ENCODE measurements at regions of chr22 and their contacts with region 1.

Region 1: DNA sequence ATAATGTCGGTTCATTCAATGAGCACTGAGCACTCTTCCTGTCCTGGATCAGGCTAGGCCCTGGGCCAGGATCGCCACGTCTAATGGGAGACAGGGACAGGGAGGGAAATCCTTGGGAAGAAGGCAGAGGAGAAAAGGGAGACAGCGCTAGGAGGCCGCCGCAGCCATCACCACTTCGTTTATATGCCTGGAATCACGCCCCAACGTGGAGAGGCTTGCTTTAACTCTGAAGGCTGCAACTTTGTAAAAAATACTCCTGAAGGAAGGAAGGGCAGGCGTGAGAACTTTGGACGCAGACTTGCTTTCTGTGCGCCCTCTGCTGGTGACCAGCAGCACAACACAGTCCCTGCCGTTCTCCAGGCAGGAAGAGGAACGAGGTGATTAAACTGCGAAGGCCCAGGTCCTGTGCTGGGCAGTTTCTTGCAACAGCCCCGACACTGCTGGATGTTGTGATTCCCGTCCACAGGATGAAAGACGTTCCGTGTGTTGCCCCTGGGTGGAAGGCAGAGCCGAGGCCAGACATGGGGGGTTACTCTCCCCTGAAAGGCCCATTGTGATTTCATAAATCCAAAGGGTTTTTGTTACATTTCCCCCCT is 22.1 kb downstream of the RIBC2 start:
- DNase-seq: peak; percentile 93
- H3K4me3 ChIP-seq: no peak overlapping the region
- H3K27ac ChIP-seq: peak overlapping the region; percentile 25
- H3K4me1 ChIP-seq: peaks cover 6% of the 10 kb centered on the region
- H3K27me3 ChIP-seq: no peaks in the 10 kb centered on the region
- CTCF ChIP-seq: peak; percentile 93 to 95
- POLR2A ChIP-seq: no peak

Region 2: GRCh38 chr22:45192701-45193187 is 242.9 kb before region 1 on chr22:
- CTCF ChIA-PET with region 1: no interaction called
- POLR2A ChIA-PET with region 1: no interaction called
- dilution Hi-C with region 1: no loop called
- intact Hi-C with region 1: no loop called
- DNase-seq: no peak
- H3K4me3 ChIP-seq: no peak overlapping the region
- H3K27ac ChIP-seq: no peak overlapping the region
- H3K4me1 ChIP-seq: no peaks in the 10 kb centered on the region
- H3K27me3 ChIP-seq: no peaks in the 10 kb centered on the region
- CTCF ChIP-seq: no peak
- POLR2A ChIP-seq: no peak

Region 3: DNA sequence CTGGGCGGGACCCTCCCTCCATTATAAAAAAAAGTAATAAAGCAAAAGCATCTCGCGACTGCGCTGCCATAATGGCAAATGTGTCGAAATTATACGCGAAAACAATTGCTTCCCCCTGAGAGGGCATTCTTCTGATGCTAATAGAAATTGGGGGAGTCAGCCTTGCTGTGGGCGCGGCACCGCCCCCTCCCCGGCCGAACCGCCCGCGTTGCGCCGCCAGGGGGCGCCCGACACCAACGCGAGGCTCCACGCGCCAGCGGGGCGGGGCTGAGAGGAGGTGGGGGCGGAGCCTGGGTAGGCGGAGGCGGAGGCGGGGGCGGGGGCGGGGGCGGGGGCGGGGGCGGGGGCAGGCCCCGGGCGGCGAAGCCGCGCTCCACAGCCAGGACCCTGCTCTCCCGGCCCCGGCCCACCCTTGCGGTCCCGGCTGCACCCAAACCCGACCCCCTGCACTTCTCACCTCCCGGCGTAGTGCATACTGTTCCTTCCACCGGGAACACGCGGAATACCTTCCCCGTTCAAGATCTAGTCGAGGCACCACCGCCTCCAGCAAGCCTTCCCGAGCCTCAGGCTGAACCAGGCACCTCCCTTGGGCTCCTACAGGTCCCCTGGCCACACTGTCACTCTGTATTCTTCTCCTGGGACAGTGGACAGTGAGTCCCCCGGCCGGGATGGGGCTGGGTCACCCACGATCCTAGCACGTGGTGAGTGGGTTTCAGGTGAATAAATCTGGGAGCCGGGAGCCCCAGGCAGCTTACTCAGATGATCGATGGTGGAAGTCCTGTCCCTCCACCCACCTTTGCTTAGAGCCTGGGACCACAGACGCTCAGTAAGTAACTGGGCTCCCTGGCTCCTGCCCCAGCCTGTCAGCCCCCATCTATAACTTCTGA is 166.4 kb before region 1 on chr22:
- CTCF ChIA-PET with region 1: interaction called, 4 read pairs
- POLR2A ChIA-PET with region 1: no interaction called
- dilution Hi-C with region 1: no loop called
- intact Hi-C with region 1: loop called (anchors 1 kb)
- DNase-seq: peak; percentile 62
- H3K4me3 ChIP-seq: peak overlapping the region; percentile 44 to 61 (median 57)
- H3K27ac ChIP-seq: no peak overlapping the region
- H3K4me1 ChIP-seq: peaks cover 6% of the 10 kb centered on the region
- H3K27me3 ChIP-seq: peaks cover 4 to 15% of the 10 kb centered on the region in 2 experiments
- CTCF ChIP-seq: peak; percentile 74 to 78
- POLR2A ChIP-seq: no peak

Region 4: GRCh38 chr22:45309472-45310227 is 126.0 kb before region 1 on chr22 and contains the start of gene FAM118A:
- CTCF ChIA-PET with region 1: no interaction called
- POLR2A ChIA-PET with region 1: no interaction called
- dilution Hi-C with region 1: no loop called
- intact Hi-C with region 1: loop called (anchors 1 kb)
- DNase-seq: peak; percentile 91
- H3K4me3 ChIP-seq: peak within 1 kb of the TSS; percentile 74 to 98 (median 97)
- H3K27ac ChIP-seq: peak within 1 kb of the TSS; percentile 66
- H3K4me1 ChIP-seq: peaks cover 24% of the 10 kb centered on the region
- H3K27me3 ChIP-seq: no peaks in the 10 kb centered on the region
- CTCF ChIP-seq: peak in 1 of 2 donors; percentile 17
- POLR2A ChIP-seq: peak; percentile 64
- total RNA-seq, gene FAM118A: 20.2 and 44.2 TPM in 2 replicates

Region 5: DNA sequence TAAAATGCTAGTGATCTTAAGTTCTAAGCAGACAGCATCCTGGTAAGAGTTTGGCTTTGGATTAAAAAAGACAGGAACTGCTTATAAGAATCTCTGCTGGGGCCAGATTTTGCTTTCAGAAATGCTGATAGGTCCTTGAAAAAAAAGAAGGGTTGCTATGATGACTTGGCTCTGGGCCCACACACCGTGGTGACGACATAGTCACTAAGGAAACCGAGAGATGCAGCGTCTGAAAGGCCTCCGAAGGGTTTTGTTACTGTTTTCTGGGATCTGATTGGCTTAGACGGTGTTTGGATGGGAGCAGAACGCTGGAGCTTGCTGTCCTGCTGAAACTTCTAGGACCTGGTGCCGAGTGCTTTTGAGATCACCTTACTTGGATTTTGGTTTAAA is 117.5 kb before region 1 on chr22:
- CTCF ChIA-PET with region 1: interaction called, 10 read pairs
- POLR2A ChIA-PET with region 1: no interaction called
- dilution Hi-C with region 1: no loop called
- intact Hi-C with region 1: loop called (anchors 1 kb)
- DNase-seq: peak; percentile 97
- H3K4me3 ChIP-seq: peak overlapping the region in 1 of 3 experiments; percentile 44
- H3K27ac ChIP-seq: peak overlapping the region; percentile 99
- H3K4me1 ChIP-seq: peaks cover 33% of the 10 kb centered on the region
- H3K27me3 ChIP-seq: no peaks in the 10 kb centered on the region
- CTCF ChIP-seq: no peak
- POLR2A ChIP-seq: no peak

Region 6: GRCh38 chr22:45336971-45337431 is 98.6 kb before region 1 on chr22:
- CTCF ChIA-PET with region 1: interaction called, 3 read pairs
- POLR2A ChIA-PET with region 1: no interaction called
- dilution Hi-C with region 1: no loop called
- intact Hi-C with region 1: loop called (anchors 1 kb)
- DNase-seq: peak; percentile 100
- H3K4me3 ChIP-seq: no peak overlapping the region
- H3K27ac ChIP-seq: peak overlapping the region; percentile 96
- H3K4me1 ChIP-seq: peaks cover 22% of the 10 kb centered on the region
- H3K27me3 ChIP-seq: no peaks in the 10 kb centered on the region
- CTCF ChIP-seq: no peak
- POLR2A ChIP-seq: no peak

Region 7: DNA sequence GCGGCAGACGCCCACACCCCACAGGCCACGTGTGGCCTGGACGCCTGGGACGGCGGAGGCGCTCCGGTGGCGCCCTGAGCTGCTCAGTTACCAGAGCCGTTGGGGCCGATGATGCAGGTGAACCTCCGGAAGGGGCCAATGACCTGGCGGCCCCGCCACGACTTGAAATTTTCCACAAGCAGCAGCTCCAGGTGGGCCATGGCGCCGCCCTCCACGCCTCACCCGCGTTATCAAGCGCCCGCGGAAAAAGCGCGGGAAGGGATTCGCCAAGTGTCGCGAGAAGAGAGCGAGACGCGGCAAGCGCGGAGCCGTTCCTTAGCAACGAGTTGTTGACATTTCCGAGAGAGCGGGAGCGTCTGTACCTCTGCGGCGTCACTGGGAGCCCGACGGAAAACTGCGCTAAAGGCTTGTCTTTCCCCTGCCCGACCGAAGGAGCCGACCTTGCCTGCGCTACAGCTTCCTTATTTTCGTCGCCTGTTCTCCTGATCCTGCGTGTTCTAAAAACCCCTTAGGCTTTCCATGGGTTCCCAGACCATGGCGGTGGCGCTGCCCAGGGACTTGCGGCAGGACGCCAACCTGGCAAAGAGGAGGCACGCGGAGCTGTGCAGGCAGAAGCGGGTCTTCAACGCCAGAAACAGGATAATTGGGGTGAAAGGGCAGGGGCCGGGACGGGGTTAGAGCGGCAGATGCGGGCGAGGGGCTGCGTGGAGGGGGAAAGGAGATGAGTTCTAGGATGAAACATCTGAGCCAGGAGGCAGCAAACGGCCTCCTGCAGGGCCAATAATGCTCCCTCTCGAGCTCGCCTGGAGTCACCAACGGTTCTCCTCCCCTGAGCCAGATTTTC is 22.1 kb before region 1 on chr22 and contains the starts of genes RIBC2 and SMC1B:
- CTCF ChIA-PET with region 1: no interaction called
- POLR2A ChIA-PET with region 1: no interaction called
- dilution Hi-C with region 1: no loop called
- intact Hi-C with region 1: loop called (anchors 1 kb)
- DNase-seq: peak; percentile 76
- H3K4me3 ChIP-seq: peak within 1 kb of the TSS; percentile 32 to 66 (median 49)
- H3K27ac ChIP-seq: peak within 1 kb of the TSS; percentile 56
- H3K4me1 ChIP-seq: peaks cover 2% of the 10 kb centered on the region
- H3K27me3 ChIP-seq: peaks cover 0 to 3% of the 10 kb centered on the region in 2 experiments
- CTCF ChIP-seq: peak in 1 of 2 donors; percentile 1
- POLR2A ChIP-seq: no peak
- total RNA-seq, gene RIBC2: 5.7 TPM in 2 replicates
- total RNA-seq, gene SMC1B: 0.07 TPM in 1 of 2 replicates, not detected in the other

Region 8: DNA sequence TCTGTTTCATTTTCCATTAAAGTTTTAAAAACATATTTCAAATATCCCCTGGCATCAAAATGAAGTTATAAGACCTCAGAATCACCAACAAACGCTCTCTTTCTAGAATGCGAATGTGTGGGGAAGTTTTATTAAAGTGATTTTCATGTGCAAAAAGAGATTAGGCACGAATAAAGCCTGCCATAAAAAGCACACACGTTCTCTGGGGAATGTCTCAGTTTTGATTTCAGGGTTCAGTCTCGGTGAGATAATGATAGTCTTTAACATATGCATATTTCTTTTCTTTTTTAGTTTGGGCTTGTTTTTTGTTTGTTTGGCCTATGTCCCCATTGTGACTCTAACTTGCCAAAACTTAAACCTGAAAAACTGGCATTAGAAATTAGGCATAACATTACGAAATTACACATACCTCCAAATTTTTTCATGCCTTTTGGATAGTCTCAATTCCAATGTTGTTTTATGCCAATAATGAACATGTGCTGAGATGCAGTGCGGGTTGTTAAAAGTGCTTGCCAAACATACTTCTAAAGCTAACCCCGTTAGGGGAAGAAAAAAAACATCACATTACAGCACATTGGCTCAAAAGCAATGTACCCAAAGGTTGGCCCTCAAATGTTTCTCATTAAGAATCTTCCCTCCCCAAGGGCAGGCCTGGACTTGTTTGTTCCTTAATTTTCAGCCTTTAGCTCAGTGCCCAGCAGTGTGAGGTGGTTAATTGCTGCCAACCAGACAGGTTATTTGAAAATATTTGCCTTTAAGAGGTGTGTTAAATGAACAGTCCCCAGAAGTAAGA is 33.8 kb after region 1 on chr22:
- CTCF ChIA-PET with region 1: no interaction called
- POLR2A ChIA-PET with region 1: no interaction called
- dilution Hi-C with region 1: no loop called
- intact Hi-C with region 1: no loop called
- DNase-seq: no peak
- H3K4me3 ChIP-seq: no peak overlapping the region
- H3K27ac ChIP-seq: no peak overlapping the region
- H3K4me1 ChIP-seq: no peaks in the 10 kb centered on the region
- H3K27me3 ChIP-seq: no peaks in the 10 kb centered on the region
- CTCF ChIP-seq: no peak
- POLR2A ChIP-seq: no peak